ENCODE measurements at regions of chr10 and their contacts with region 1.

Region 1: DNA sequence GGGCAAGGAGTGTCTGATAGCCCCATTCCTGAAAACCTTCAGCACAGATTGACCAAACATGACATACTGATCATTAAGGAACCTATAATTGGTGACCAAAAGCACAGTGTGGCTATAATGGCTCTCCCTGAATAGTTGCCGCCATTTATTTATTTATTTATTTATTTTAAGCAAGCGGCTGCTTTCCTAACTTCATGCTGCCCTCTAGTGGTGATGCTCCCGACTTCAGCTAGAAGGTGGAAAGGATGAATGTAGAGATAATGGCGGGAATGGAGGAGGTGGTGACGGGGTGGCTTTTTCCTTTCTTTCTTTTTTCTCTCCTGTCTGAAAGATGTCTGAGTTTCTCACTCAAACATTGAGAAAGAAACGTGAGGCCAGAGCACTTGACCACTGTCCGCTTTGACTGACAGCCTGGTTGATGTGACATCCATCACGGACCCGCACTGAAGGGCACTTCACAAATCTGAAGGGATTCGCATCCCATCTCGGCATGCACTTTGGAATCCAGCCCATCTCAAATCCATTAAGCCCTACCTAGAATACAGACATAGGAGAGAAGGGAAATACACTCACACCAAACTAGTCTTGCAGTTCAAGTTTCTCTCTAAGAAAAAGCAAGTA is 1090.1 kb downstream of the KCNMA1 start:
- DNase-seq: peak; percentile 77
- ATAC-seq: peak; percentile 64
- H3K4me3 ChIP-seq: no peak overlapping the region
- H3K27ac ChIP-seq: no peak overlapping the region
- H3K4me1 ChIP-seq: peaks cover 4% of the 10 kb centered on the region
- H3K27me3 ChIP-seq: peaks cover 5% of the 10 kb centered on the region
- CTCF ChIP-seq: peak; percentile 91
- POLR2A ChIP-seq: no peak
- RAD21 ChIP-seq: peak; percentile 93

Region 2: GRCh38 chr10:76036111-76036940 is 511.1 kb before region 1 on chr10:
- CTCF ChIA-PET with region 1: interaction called, 6 read pairs
- POLR2A ChIA-PET with region 1: no interaction called
- dilution Hi-C with region 1: no loop called
- in situ Hi-C with region 1: loop called (anchors 10 kb)
- intact Hi-C with region 1: loop called (anchors 2 kb)
- DNase-seq: peak; percentile 56
- ATAC-seq: peak; percentile 97
- H3K4me3 ChIP-seq: no peak overlapping the region
- H3K27ac ChIP-seq: no peak overlapping the region
- H3K4me1 ChIP-seq: no peaks in the 10 kb centered on the region
- H3K27me3 ChIP-seq: peaks cover 2% of the 10 kb centered on the region; the same call in 1 of the 2 replicates
- CTCF ChIP-seq: peak; percentile 83
- POLR2A ChIP-seq: no peak
- RAD21 ChIP-seq: peak; percentile 76

Region 3: GRCh38 chr10:76251841-76252671 is 295.4 kb before region 1 on chr10:
- CTCF ChIA-PET with region 1: no interaction called
- POLR2A ChIA-PET with region 1: no interaction called
- dilution Hi-C with region 1: no loop called
- in situ Hi-C with region 1: no loop called
- intact Hi-C with region 1: loop called (anchors 1 kb)
- DNase-seq: peak; percentile 93
- ATAC-seq: peak; percentile 84
- H3K4me3 ChIP-seq: no peak overlapping the region
- H3K27ac ChIP-seq: no peak overlapping the region
- H3K4me1 ChIP-seq: peaks cover 3% of the 10 kb centered on the region; the same call in 1 of the 2 replicates
- H3K27me3 ChIP-seq: no peaks in the 10 kb centered on the region
- CTCF ChIP-seq: no peak
- POLR2A ChIP-seq: no peak
- RAD21 ChIP-seq: no peak

Region 4: DNA sequence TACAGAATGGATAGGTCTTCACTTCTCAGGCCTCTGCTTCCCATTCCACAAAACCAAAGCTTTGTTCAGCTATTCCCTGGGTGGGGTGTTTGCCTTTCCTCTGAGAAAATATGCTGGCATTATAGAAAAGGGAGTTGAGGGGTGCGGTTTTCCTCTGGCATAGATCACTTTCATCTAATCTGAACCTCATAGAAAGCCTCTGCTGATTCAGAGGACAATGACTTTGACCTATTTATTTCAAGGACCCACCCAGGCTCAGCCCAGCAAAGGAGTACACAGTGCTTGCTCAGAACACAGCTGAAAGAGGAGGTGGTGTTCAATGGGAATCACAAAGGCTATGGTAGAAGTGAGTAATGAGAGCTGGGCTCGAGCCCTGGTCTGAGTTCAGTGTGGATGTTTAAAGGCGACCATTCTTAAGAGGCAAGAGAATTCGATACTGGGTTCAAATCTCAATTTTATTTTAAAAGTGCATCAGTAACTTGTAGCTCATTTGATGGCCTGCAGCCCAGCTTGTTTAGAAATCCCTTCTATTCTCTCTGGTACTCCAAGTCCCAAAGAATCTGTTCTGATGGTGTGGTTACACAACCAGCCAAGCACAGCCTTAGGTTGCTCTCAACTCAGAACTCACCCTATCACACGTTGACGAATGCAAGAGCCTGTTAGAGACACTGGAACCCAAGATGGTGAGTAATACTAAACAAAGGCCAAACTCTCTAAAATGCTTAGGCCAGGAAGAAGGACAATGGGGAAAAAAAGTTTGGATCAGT is 103.2 kb before region 1 on chr10:
- CTCF ChIA-PET with region 1: no interaction called
- POLR2A ChIA-PET with region 1: no interaction called
- dilution Hi-C with region 1: no loop called
- in situ Hi-C with region 1: no loop called
- intact Hi-C with region 1: no loop called
- DNase-seq: peak; percentile 13
- ATAC-seq: peak; percentile 44; the same call in 1 of the 2 replicates
- H3K4me3 ChIP-seq: no peak overlapping the region
- H3K27ac ChIP-seq: no peak overlapping the region
- H3K4me1 ChIP-seq: peaks cover 4% of the 10 kb centered on the region; the same call in 1 of the 2 replicates
- H3K27me3 ChIP-seq: no peaks in the 10 kb centered on the region; the same call in 1 of the 2 replicates
- CTCF ChIP-seq: no peak
- POLR2A ChIP-seq: no peak
- RAD21 ChIP-seq: no peak

Region 5: DNA sequence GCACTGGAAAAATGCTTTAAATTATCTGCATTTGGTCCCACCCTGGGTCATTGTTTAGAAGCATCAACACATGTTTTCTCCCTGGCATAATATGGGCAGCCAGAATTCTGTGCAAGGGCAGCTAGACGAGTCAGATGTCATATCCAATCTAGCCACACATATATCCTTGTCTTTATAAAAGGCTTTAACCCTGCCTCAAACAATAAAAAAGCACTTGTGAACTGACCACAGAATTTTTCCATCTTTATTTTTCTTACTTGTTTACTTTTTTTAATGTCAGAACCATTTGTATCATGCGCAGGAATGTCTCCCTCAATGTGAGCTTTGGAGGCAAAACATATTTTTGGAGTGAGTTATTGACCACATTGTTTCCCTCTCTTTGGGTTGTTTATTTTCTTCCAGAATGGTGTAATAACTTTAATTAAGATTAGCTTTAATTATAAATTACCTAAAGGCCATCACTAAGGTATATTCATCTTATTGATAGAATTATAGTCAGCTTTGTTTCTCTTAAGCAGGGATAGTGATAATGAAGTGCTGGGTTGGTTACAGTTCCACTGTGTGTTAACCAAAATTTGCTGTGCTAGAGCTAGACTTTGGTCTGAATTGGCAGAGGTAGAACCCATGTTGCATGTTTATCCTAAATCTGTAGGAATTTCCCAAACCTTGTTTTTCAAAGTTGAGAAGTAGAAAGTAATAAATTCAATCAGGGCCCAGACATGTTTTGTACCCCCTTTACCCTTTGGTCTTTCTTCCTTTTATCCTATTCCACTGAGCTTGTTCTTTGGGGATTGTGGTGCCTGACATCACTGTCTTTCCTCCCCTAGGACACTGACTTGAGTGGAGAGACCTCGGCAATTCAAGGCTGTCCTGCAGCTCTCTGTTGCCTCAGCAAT is 11.8 kb after region 1 on chr10:
- CTCF ChIA-PET with region 1: no interaction called
- POLR2A ChIA-PET with region 1: no interaction called
- dilution Hi-C with region 1: no loop called
- in situ Hi-C with region 1: no loop called
- intact Hi-C with region 1: no loop called
- DNase-seq: peak; percentile 70
- ATAC-seq: peak; percentile 76
- H3K4me3 ChIP-seq: no peak overlapping the region
- H3K27ac ChIP-seq: peak overlapping the region; percentile 89
- H3K4me1 ChIP-seq: peaks cover 19% of the 10 kb centered on the region
- H3K27me3 ChIP-seq: peaks cover 11% of the 10 kb centered on the region
- CTCF ChIP-seq: no peak
- POLR2A ChIP-seq: no peak
- RAD21 ChIP-seq: no peak

Region 6: GRCh38 chr10:76984559-76985443 is 437.3 kb after region 1 on chr10:
- CTCF ChIA-PET with region 1: no interaction called
- POLR2A ChIA-PET with region 1: no interaction called
- dilution Hi-C with region 1: no loop called
- in situ Hi-C with region 1: loop called (anchors 25 kb)
- intact Hi-C with region 1: loop called (anchors 2 kb)
- DNase-seq: peak; percentile 79
- ATAC-seq: peak; percentile 85
- H3K4me3 ChIP-seq: no peak overlapping the region
- H3K27ac ChIP-seq: no peak overlapping the region
- H3K4me1 ChIP-seq: no peaks in the 10 kb centered on the region; the same call in 1 of the 2 replicates
- H3K27me3 ChIP-seq: peaks cover 3% of the 10 kb centered on the region; the same call in 1 of the 2 replicates
- CTCF ChIP-seq: peak; percentile 81
- POLR2A ChIP-seq: no peak
- RAD21 ChIP-seq: peak; percentile 72

Region 7: GRCh38 chr10:77111611-77112550 is 564.4 kb after region 1 on chr10:
- CTCF ChIA-PET with region 1: no interaction called
- POLR2A ChIA-PET with region 1: no interaction called
- dilution Hi-C with region 1: no loop called
- in situ Hi-C with region 1: loop called (anchors 10 kb)
- intact Hi-C with region 1: loop called (anchors 2 kb)
- DNase-seq: peak; percentile 87
- ATAC-seq: peak; percentile 90
- H3K4me3 ChIP-seq: no peak overlapping the region
- H3K27ac ChIP-seq: no peak overlapping the region
- H3K4me1 ChIP-seq: peaks cover 3% of the 10 kb centered on the region
- H3K27me3 ChIP-seq: no peaks in the 10 kb centered on the region
- CTCF ChIP-seq: peak; percentile 88
- POLR2A ChIP-seq: peak; percentile 38; the same call in 1 of the 2 replicates
- RAD21 ChIP-seq: peak; percentile 93

Measured in IMR-90 (cell line).